Activated T-helper 2 cell treated with anti-CD3 and anti-CD28 coated beads, Interferon-gamma antibody, Interleukin-2, Interleukin-4, amounts not matched to agents 10 μg/mL and 5 μg/mL and 100 μg/mL, durations not matched to agents 14 hours and 24 hours and 36 hours (primary cell): ENCODE measurements at regions of chr10 and their contacts with region 1.

Region 1: GRCh38 chr10:68600041-68600778 is 40.1 kb downstream of the TET1 start:
- DNase-seq: peak; percentile 52
- H3K4me3 Mint-ChIP-seq: peak overlapping the region; percentile 87
- H3K27ac Mint-ChIP-seq: peak overlapping the region; percentile 88
- H3K4me1 Mint-ChIP-seq: peaks cover 26% of the 10 kb centered on the region
- H3K27me3 Mint-ChIP-seq: no peaks in the 10 kb centered on the region

Region 2: GRCh38 chr10:68560186-68560942 is 39.8 kb before region 1 on chr10 and contains the start of gene TET1:
- intact Hi-C with region 1: loop called (anchors 1 kb)
- DNase-seq: peak; percentile 12
- H3K4me3 Mint-ChIP-seq: peak within 1 kb of the TSS; percentile 69
- H3K27ac Mint-ChIP-seq: no peak within 1 kb of the TSS
- H3K4me1 Mint-ChIP-seq: peaks cover 16% of the 10 kb centered on the region
- H3K27me3 Mint-ChIP-seq: peaks cover 72% of the 10 kb centered on the region
- total RNA-seq, gene TET1: 1.5 and 1.6 TPM in 2 replicates